ENCODE measurements at regions of chr1 and their contacts with region 1.

Region 1: GRCh38 chr1:214261206-214262123 is 19.5 kb upstream of the SMYD2 start:
- DNase-seq: peak; percentile 92
- H3K4me3 Mint-ChIP-seq: no peak overlapping the region
- H3K27ac Mint-ChIP-seq: no peak overlapping the region
- H3K4me1 Mint-ChIP-seq: peaks cover 13% of the 10 kb centered on the region
- H3K27me3 Mint-ChIP-seq: no peaks in the 10 kb centered on the region
- CTCF ChIP-seq: peak; percentile 90

Region 2: GRCh38 chr1:214637722-214638458 is 376.4 kb after region 1 on chr1:
- CTCF ChIA-PET with region 1: no interaction called
- intact Hi-C with region 1: loop called (anchors 5 kb)
- DNase-seq: peak; percentile 42
- H3K4me3 Mint-ChIP-seq: no peak overlapping the region
- H3K27ac Mint-ChIP-seq: no peak overlapping the region
- H3K4me1 Mint-ChIP-seq: no peaks in the 10 kb centered on the region
- H3K27me3 Mint-ChIP-seq: no peaks in the 10 kb centered on the region
- CTCF ChIP-seq: peak; percentile 45

Measured in Calu3 (cell line).